ENCODE measurements at regions of chr18 and their contacts with region 1.

Region 1: DNA sequence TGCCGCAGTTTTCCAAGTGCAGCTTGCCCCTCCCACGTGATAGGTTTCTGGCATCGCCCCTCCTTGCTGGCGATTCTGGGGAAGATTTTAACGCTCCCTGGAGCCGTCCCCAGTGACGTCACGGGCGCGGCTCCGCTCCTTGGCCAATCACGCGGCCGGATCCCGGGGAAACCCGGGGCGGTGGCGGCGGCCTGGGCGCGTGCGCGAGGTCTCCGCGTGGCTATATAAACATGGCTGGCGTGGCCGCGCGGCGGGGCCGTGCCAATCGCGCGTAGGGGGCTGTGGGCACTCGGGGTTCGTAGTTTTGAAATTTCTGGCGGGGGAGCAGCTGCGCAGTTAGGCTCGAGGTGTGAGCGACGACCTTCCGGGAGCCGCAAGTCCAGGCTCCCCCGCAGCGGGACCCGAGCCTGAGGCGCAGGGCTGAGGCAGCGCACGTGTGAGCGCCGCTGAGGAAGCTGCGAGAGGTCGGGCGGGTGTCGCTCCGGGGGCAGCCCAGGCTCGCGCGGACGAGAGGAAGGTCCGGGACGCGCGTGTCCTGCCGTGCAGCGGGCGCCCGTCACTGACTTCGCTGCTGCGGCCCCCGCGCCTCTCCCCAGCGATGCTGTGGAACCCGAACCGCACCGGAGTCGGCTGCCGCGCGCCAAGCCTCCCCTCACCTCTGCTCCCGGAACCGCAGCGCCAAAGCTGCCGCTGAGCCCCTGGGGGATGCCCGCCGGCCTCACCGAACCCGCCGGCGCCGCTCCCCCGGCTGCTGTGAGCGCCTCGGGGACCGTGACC is at the start of gene TAF4B:
- DNase-seq: peak; percentile 95
- H3K4me3 Mint-ChIP-seq: peak within 1 kb of the TSS; percentile 92
- H3K27ac Mint-ChIP-seq: peak within 1 kb of the TSS; percentile 94
- H3K4me1 Mint-ChIP-seq: peaks cover 32% of the 10 kb centered on the region
- H3K27me3 Mint-ChIP-seq: no peaks in the 10 kb centered on the region
- total RNA-seq, gene TAF4B: 15.9 to 16.3 TPM

Region 2: GRCh38 chr18:25875551-25876240 is 350.7 kb before region 1 on chr18:
- CTCF ChIA-PET with region 1: no interaction called
- intact Hi-C with region 1: no loop called
- DNase-seq: no peak
- H3K4me3 Mint-ChIP-seq: no peak overlapping the region
- H3K27ac Mint-ChIP-seq: no peak overlapping the region
- H3K4me1 Mint-ChIP-seq: no peaks in the 10 kb centered on the region
- H3K27me3 Mint-ChIP-seq: peaks cover 16% of the 10 kb centered on the region

Region 3: DNA sequence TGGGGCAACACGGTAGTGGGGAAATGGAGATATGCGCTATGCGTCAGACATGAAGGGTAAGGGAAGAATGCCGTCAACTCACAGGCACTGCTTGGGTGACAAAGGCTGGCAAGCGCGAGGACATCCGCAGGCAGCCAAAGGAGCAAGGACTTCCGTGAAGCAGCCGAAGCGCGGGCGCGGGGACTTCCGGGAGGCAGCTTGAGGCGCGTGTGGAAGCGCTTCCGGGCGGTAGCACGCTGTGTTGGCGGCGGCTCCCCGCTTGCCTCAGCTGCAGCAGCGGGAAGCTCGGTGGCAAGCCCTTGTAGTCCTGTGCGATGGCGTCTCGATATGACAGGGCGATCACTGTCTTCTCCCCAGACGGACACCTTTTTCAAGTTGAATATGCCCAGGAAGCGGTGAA is 92.8 kb before region 1 on chr18 and contains the start of gene PSMA8:
- CTCF ChIA-PET with region 1: no interaction called
- intact Hi-C with region 1: loop called (anchors 5 kb)
- DNase-seq: peak; percentile 68
- H3K4me3 Mint-ChIP-seq: peak within 1 kb of the TSS; percentile 70
- H3K27ac Mint-ChIP-seq: peak within 1 kb of the TSS; percentile 79
- H3K4me1 Mint-ChIP-seq: no peaks in the 10 kb centered on the region
- H3K27me3 Mint-ChIP-seq: no peaks in the 10 kb centered on the region
- total RNA-seq, gene PSMA8: 2.1 TPM

Region 4: DNA sequence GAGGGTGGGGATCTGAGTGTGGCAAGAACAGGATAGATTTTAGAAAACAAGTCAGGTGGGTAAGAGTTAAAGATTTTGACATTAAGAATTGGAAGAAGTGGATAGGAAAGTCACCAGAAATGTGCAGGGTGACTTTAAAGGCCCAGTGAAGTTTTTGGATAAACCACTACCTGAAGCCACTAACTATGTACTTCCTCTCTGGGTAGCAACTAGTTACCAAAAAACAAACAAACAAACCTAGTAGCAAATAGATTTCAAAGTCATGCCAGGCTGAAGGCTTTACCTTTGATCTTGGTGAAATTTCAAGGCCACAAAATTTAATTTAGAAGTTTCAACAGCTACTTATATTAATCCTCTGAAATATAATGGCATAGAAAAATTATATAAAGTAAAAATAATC is 50.3 kb before region 1 on chr18:
- CTCF ChIA-PET with region 1: no interaction called
- intact Hi-C with region 1: no loop called
- DNase-seq: no peak
- H3K4me3 Mint-ChIP-seq: no peak overlapping the region
- H3K27ac Mint-ChIP-seq: no peak overlapping the region
- H3K4me1 Mint-ChIP-seq: peaks cover 7% of the 10 kb centered on the region
- H3K27me3 Mint-ChIP-seq: no peaks in the 10 kb centered on the region

Region 5: DNA sequence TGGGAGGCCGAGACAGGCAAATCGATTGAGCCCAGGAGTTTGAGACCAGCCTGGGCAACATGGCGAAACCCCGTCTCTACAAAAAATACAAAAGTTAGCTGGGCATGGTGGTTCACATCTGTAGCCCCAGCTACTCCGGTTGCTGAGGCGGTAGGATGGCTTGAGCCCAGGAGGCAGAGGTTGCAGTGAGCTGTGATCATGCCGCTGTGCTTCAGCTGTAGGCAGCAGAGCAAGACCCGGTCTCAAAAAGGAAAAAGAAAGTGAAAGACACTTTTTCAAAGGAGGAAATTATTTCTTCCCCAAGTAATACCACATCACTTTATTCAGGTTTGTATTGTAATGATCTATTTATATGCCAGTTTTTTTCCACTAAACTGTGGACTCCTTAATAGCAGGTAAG is 35.9 kb before region 1 on chr18:
- CTCF ChIA-PET with region 1: no interaction called
- intact Hi-C with region 1: loop called (anchors 1 kb)
- DNase-seq: peak; percentile 49
- H3K4me3 Mint-ChIP-seq: peak overlapping the region; percentile 74
- H3K27ac Mint-ChIP-seq: peak overlapping the region; percentile 63
- H3K4me1 Mint-ChIP-seq: peaks cover 13% of the 10 kb centered on the region
- H3K27me3 Mint-ChIP-seq: no peaks in the 10 kb centered on the region

Region 6: DNA sequence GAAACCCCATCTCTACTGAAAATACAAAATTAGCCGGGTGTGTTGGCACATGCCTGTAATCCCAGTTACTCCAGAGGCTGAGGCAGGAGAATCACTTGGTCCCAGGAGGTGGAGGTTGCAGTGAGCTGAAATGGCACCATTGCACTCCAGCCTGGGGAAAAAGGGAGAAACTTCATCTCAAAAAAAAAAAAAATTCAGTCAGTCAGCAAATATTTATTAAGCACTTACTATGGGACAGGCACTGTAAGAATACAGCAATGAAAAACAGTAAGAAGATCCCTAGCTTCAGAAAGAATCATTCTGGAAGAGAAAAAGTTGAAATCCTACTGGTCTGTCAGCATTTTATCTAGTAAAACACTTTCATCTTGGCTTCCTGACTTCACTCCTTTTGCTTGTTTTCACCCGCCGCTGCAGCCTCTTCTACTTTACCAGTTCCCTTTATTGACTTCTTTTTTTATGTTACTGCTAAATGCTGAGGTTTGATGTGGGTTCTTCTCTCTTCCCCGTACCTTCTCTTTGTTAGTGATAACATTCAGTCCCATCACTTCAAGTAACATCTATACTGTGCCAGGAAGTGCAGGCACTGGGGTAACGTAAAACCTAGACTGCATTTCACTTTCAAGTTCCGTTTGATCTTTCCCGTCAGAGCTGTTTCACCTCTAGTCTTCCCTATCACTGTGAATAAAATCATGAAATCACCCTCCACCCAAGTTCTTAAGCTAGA is 11.0 kb before region 1 on chr18:
- CTCF ChIA-PET with region 1: interaction called, 4 read pairs
- intact Hi-C with region 1: loop called (anchors 1 kb)
- DNase-seq: peak; percentile 82
- H3K4me3 Mint-ChIP-seq: peak overlapping the region; percentile 44
- H3K27ac Mint-ChIP-seq: peak overlapping the region; percentile 88
- H3K4me1 Mint-ChIP-seq: peaks cover 33% of the 10 kb centered on the region
- H3K27me3 Mint-ChIP-seq: no peaks in the 10 kb centered on the region

Region 7: GRCh38 chr18:26255695-26256622 is 29.5 kb after region 1 on chr18:
- CTCF ChIA-PET with region 1: no interaction called
- intact Hi-C with region 1: loop called (anchors 2 kb)
- DNase-seq: no peak
- H3K4me3 Mint-ChIP-seq: no peak overlapping the region
- H3K27ac Mint-ChIP-seq: no peak overlapping the region
- H3K4me1 Mint-ChIP-seq: peaks cover 31% of the 10 kb centered on the region
- H3K27me3 Mint-ChIP-seq: no peaks in the 10 kb centered on the region

Region 8: DNA sequence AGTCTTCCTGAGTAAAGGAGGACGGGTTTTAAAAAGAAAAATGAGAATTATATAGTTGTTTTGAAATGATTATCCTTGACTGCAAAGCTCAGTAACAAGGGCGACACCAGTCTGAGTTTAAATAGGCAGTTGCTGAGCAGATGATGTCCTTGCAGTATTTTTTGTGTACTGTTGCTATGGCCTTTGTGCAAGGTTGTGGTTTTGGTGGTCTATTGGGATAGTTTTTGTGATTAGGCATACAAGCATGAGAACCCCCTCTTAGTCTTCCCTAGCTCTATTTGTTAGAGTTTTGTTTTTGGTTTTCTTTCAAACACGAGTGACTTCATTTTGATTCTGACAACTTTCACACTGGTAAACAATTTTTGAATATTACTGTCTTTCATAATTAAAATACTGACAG is 64.0 kb after region 1 on chr18:
- CTCF ChIA-PET with region 1: interaction called, 7 read pairs
- intact Hi-C with region 1: loop called (anchors 5 kb)
- DNase-seq: no peak
- H3K4me3 Mint-ChIP-seq: no peak overlapping the region
- H3K27ac Mint-ChIP-seq: no peak overlapping the region
- H3K4me1 Mint-ChIP-seq: peaks cover 6% of the 10 kb centered on the region
- H3K27me3 Mint-ChIP-seq: no peaks in the 10 kb centered on the region

Region 9: GRCh38 chr18:26548429-26549262 is 322.2 kb after region 1 on chr18 and contains the start of gene KCTD1:
- CTCF ChIA-PET with region 1: no interaction called
- intact Hi-C with region 1: loop called (anchors 2 kb)
- DNase-seq: peak; percentile 76
- H3K4me3 Mint-ChIP-seq: peak within 1 kb of the TSS; percentile 79
- H3K27ac Mint-ChIP-seq: no peak within 1 kb of the TSS
- H3K4me1 Mint-ChIP-seq: peaks cover 30% of the 10 kb centered on the region
- H3K27me3 Mint-ChIP-seq: peaks cover 36% of the 10 kb centered on the region
- total RNA-seq, gene KCTD1: 1.7 to 1.9 TPM

Measured in activated naive CD4-positive, alpha-beta T cell treated with anti-CD3 and anti-CD28 coated beads for 36 hours (primary cell).